MCF 10A (cell line): ENCODE measurements at regions of chr1 and their contacts with region 1.

Region 1: DNA sequence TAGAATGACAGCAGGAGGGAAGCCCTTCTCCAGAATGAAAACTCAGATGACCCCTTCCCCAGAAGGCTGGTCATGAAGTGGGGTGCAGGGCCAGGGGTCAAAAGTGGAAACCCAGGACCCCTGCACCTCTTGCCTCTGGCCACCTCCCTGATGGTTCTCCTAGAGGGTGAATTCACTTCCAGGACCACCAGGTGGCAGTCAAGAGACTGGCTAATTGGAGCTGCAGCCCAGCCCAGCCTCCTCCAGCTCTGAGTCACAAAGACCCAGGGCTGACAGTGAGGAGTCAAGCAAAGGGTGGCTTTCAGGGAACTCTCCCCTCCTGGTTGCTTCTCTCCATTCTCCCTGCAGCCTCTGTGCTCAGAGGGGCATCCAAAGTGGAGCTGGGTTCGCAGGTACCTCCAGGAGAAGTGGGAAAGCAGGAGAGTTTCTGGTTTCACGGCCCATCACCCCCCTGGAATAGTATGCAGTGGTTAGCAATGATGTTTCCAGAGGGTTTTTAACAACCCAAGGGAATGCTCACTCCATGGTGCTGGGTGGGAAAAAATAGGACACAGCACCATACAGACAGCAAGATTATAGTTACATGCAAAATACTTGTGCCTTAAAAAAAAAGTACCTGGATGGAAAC is 6.1 kb upstream of the EPHB2 start:
- DNase-seq: peak; percentile 89
- H3K4me3 Mint-ChIP-seq: no peak overlapping the region
- H3K27ac Mint-ChIP-seq: no peak overlapping the region
- H3K4me1 Mint-ChIP-seq: no peaks in the 10 kb centered on the region
- H3K27me3 Mint-ChIP-seq: no peaks in the 10 kb centered on the region
- CTCF ChIP-seq: peak; percentile 89

Region 2: GRCh38 chr1:22717037-22717760 is 12.6 kb after region 1 on chr1:
- CTCF ChIA-PET with region 1: interaction called, 32 read pairs
- POLR2A ChIA-PET with region 1: interaction called, 3 read pairs
- intact Hi-C with region 1: no loop called
- DNase-seq: no peak
- H3K4me3 Mint-ChIP-seq: no peak overlapping the region
- H3K27ac Mint-ChIP-seq: no peak overlapping the region
- H3K4me1 Mint-ChIP-seq: no peaks in the 10 kb centered on the region
- H3K27me3 Mint-ChIP-seq: no peaks in the 10 kb centered on the region
- CTCF ChIP-seq: no peak

Region 3: DNA sequence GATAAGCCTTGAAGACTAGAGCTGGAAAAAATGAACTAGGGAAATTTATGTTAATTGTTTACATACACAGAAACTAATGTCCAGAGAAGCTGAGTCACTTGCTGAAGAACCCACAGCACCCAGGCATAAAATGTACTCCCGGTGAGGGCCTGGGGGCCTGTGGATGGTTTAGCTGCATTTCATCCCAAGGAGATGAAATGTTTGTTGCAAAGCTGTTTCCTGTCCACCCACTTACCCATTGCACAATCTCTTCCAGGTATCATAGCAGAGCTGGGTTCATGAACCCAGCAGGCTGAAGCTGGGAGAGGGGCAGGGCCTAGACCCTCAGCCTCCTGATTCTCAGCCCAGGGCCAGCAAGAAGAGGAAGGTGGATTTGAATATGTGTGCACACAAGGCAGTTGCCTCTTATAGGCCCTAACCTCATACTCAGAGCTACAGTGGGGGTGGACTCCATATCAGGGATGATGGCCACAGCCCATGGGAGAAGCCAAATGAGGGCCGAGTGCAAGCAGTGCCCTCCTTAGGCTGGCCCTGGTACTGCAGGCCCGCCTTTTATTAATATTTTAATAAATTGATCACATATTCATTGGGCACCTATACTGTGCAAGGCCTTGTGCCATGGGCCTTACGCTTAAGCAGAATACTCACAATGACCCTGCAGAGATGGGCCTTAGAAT is 157.3 kb after region 1 on chr1:
- CTCF ChIA-PET with region 1: interaction called, 23 read pairs
- POLR2A ChIA-PET with region 1: no interaction called
- intact Hi-C with region 1: loop called (anchors 1 kb)
- DNase-seq: peak; percentile 90
- H3K4me3 Mint-ChIP-seq: no peak overlapping the region
- H3K27ac Mint-ChIP-seq: no peak overlapping the region
- H3K4me1 Mint-ChIP-seq: no peaks in the 10 kb centered on the region
- H3K27me3 Mint-ChIP-seq: no peaks in the 10 kb centered on the region
- CTCF ChIP-seq: peak; percentile 71

Region 4: GRCh38 chr1:22889213-22889827 is 184.8 kb after region 1 on chr1:
- CTCF ChIA-PET with region 1: interaction called, 113 read pairs
- POLR2A ChIA-PET with region 1: interaction called, 7 read pairs
- intact Hi-C with region 1: loop called (anchors 1 kb)
- DNase-seq: peak; percentile 58
- H3K4me3 Mint-ChIP-seq: no peak overlapping the region
- H3K27ac Mint-ChIP-seq: no peak overlapping the region
- H3K4me1 Mint-ChIP-seq: no peaks in the 10 kb centered on the region
- H3K27me3 Mint-ChIP-seq: no peaks in the 10 kb centered on the region
- CTCF ChIP-seq: peak; percentile 84

Region 5: GRCh38 chr1:22930235-22930912 is 225.8 kb after region 1 on chr1:
- CTCF ChIA-PET with region 1: interaction called, 24 read pairs
- POLR2A ChIA-PET with region 1: no interaction called
- intact Hi-C with region 1: loop called (anchors 1 kb)
- DNase-seq: peak; percentile 68
- H3K4me3 Mint-ChIP-seq: no peak overlapping the region
- H3K27ac Mint-ChIP-seq: no peak overlapping the region
- H3K4me1 Mint-ChIP-seq: no peaks in the 10 kb centered on the region
- H3K27me3 Mint-ChIP-seq: peaks cover 54% of the 10 kb centered on the region
- CTCF ChIP-seq: peak; percentile 72

Region 6: DNA sequence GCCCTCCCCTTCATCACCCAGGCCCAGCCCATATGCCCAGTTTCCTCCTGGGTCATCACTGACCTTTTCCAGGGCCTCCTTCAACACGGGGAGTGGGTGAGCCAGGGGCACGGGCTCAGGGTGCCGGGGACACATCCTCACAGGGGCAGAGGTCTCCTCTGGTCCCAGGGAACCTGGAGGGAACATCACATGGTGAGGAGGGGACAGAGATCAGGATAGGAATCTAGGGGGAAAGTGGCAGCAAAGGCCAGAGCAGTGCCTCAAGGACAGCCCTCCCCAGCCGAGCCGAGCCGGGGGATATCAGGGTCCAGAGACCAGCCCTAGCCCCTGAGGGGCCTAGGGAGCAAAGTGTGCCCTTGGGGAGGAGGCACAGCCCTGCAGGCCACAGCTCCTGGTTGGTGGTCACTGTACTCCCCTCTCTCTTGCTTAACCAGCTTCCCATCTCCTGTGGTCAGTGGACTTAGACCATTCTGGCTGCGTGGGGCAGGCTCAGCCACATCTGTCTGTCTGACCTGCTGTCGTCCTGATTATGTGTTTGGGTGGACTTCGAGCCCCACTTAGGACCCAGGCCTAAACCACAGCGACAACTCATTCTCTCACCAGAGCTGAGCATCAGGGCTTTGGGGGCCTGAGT is 258.6 kb after region 1 on chr1:
- CTCF ChIA-PET with region 1: interaction called, 24 read pairs
- POLR2A ChIA-PET with region 1: no interaction called
- intact Hi-C with region 1: loop called (anchors 1 kb)
- DNase-seq: no peak
- H3K4me3 Mint-ChIP-seq: no peak overlapping the region
- H3K27ac Mint-ChIP-seq: no peak overlapping the region
- H3K4me1 Mint-ChIP-seq: peaks cover 4% of the 10 kb centered on the region
- H3K27me3 Mint-ChIP-seq: peaks cover 4% of the 10 kb centered on the region
- CTCF ChIP-seq: no peak

Region 7: GRCh38 chr1:22969304-22969709 is 264.8 kb after region 1 on chr1:
- CTCF ChIA-PET with region 1: interaction called, 24 read pairs
- POLR2A ChIA-PET with region 1: no interaction called
- intact Hi-C with region 1: loop called (anchors 1 kb)
- DNase-seq: peak; percentile 78
- H3K4me3 Mint-ChIP-seq: peak overlapping the region; percentile 49
- H3K27ac Mint-ChIP-seq: peak overlapping the region; percentile 6
- H3K4me1 Mint-ChIP-seq: peaks cover 32% of the 10 kb centered on the region
- H3K27me3 Mint-ChIP-seq: peaks cover 10% of the 10 kb centered on the region
- CTCF ChIP-seq: no peak